ENCODE measurements at regions of chr4 and their contacts with region 1.

Region 1: GRCh38 chr4:118772081-118772766 is 63.7 kb downstream of the SEC24D start:
- DNase-seq: peak; percentile 32
- CTCF ChIP-seq: peak; percentile 59

Region 2: GRCh38 chr4:118746292-118746919 is 25.8 kb before region 1 on chr4:
- CTCF ChIA-PET with region 1: interaction called, 18 read pairs
- POLR2A ChIA-PET with region 1: interaction called, 3 read pairs
- DNase-seq: no peak
- CTCF ChIP-seq: no peak

Region 3: DNA sequence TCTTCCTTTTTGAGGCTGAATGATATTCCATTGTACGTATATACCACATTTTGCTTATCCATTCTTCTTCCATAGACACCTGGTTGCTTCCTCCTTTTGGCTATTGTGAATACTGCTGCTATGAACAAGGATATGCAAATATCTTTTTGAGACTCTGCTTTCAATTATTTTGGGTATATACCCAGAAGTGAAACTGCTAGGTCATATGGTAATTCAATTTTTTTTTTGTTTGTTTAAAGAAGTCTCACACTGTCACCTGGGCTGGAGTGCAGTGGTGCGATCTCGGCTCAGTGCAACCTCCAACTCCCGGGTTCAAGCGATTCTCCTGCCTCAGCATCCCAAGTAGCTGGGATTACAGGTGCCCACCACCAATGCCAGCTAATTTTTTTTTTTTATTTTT is 11.7 kb before region 1 on chr4:
- CTCF ChIA-PET with region 1: interaction called, 12 read pairs
- POLR2A ChIA-PET with region 1: no interaction called
- DNase-seq: no peak
- CTCF ChIP-seq: no peak

Region 4: GRCh38 chr4:118798658-118799057 is 26.4 kb after region 1 on chr4:
- CTCF ChIA-PET with region 1: no interaction called
- POLR2A ChIA-PET with region 1: no interaction called
- DNase-seq: no peak
- CTCF ChIP-seq: no peak

Region 5: GRCh38 chr4:118888666-118889311 is 116.6 kb after region 1 on chr4 and contains the start of gene SYNPO2:
- CTCF ChIA-PET with region 1: interaction called, 34 read pairs
- POLR2A ChIA-PET with region 1: no interaction called
- DNase-seq: peak; percentile 37
- CTCF ChIP-seq: no peak

Region 6: GRCh38 chr4:119016636-119017035 is 244.4 kb after region 1 on chr4:
- CTCF ChIA-PET with region 1: no interaction called
- POLR2A ChIA-PET with region 1: no interaction called
- DNase-seq: no peak
- CTCF ChIP-seq: no peak

Region 7: GRCh38 chr4:119632216-119632615 is 860.0 kb after region 1 on chr4:
- CTCF ChIA-PET with region 1: no interaction called
- POLR2A ChIA-PET with region 1: no interaction called
- DNase-seq: no peak
- CTCF ChIP-seq: no peak